GM23248 (cell line): ENCODE measurements at regions of chr9 and their contacts with region 1.

Region 1: DNA sequence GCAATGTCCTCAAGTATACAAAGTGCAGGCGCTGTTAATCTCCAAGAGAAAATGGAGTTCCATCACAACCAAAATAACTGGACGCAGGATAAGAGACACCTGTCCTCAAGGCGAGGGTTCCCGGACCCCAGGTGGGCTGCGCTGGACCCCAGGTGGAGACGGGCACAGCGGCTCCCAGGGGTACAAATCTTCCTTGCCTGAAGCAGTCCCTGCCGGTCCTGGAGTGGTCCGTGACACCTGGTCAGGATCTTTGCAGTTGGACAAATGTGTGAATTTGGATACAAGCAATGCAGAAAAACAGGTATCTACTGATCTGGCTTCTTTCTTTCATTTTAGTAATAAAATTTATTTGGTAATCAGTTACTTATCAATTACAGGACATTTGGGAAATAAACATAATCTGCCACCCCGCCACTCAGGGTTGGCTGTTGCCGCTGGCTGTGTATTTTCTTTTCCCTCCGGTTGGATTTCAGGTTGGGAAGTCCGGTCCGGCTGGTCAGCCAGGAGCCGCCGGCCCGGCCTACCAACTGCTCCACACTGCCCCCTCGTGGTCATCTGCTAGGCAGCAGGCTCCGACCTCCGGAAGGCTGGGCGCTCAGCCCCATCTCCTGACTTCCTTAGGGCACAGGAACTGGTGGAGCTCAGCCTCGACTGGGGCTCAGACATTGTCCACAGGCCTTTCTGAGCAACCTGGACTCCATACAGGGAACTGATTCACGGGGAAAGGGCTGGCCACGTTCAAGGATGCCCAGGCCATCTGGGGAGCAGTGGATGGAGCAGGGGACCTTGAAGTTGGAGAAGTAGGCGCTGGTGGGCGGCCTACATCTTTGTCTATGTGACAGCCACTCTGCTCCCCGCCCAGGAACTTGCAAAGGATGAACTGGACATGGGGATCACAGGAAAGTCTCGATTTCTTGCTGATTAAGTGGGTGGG is 43.4 kb downstream of the NXNL2 start:
- DNase-seq: peak; percentile 86
- H3K4me3 ChIP-seq: peak overlapping the region; percentile 48
- H3K27ac ChIP-seq: no peak overlapping the region
- H3K4me1 ChIP-seq: peaks cover 10% of the 10 kb centered on the region
- H3K27me3 ChIP-seq: no peaks in the 10 kb centered on the region

Region 2: GRCh38 chr9:88173378-88173999 is 404.9 kb before region 1 on chr9:
- in situ Hi-C with region 1: loop called (anchors 10 kb)
- DNase-seq: peak; percentile 77
- H3K4me3 ChIP-seq: no peak overlapping the region
- H3K27ac ChIP-seq: no peak overlapping the region
- H3K4me1 ChIP-seq: no peaks in the 10 kb centered on the region
- H3K27me3 ChIP-seq: 0 out of 2 replicates have a peak, but pooled peaks cover 8% of the 10 kb centered on the region

Region 3: DNA sequence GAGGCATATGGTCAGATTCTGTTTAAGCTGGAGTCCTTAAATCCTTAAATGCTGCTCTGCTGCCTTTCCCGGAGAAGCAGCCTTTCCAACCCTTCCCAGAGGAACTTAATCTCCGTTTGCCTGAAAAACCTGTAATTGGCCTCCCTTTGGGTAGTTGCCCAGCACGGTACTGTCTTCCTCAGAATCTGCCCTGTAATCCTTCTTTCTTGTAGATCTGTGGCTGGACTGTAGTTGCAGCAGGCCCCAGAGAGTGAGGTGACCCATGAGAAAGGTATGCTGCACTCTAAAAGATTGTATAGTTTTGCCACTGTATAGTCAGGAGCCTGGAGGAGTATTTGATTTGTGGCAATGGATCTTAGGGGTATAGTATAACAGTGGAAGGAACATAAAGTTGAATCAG is 178.4 kb before region 1 on chr9:
- in situ Hi-C with region 1: loop called (anchors 10 kb)
- DNase-seq: peak; percentile 86
- H3K4me3 ChIP-seq: peak overlapping the region; percentile 35
- H3K27ac ChIP-seq: peak overlapping the region; percentile 77
- H3K4me1 ChIP-seq: peaks cover 33% of the 10 kb centered on the region
- H3K27me3 ChIP-seq: no peaks in the 10 kb centered on the region

Region 4: DNA sequence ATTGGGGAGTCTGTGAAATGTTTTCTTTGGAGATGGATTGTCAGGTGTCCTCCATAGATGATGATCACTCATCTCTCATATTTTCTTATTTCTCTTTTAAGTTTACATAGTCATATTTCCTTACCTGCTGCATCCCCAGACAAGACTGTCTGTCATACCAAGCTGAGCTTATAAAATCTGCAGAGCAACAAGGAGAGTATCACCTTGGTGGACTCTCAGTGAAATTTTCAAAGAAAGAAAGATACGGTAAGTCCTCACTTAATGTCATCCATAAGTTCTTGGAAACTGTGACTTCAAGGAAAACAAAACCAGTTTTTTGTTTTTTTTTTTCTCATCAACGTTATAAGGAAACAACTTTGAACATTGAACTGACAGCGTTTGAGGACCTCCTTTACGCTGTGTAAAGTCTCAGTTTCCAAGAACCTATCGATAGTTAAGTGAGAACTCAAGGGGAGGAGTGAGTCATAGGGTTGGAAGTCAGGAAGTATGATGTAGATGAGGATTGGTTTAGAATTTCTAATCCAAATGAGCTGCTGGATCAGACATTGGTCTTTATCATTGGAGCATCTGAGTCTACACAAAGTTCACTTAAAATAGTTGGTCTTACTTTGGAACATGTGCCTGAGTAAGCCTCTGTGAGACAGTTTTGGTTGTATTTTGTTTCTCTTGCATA is 144.7 kb before region 1 on chr9:
- in situ Hi-C with region 1: no loop called
- DNase-seq: peak; percentile 17
- H3K4me3 ChIP-seq: no peak overlapping the region
- H3K27ac ChIP-seq: no peak overlapping the region
- H3K4me1 ChIP-seq: 0 out of 2 replicates have a peak, but pooled peaks cover 3% of the 10 kb centered on the region
- H3K27me3 ChIP-seq: no peaks in the 10 kb centered on the region